ENCODE measurements at regions of chr19 and their contacts with region 1.

Region 1: DNA sequence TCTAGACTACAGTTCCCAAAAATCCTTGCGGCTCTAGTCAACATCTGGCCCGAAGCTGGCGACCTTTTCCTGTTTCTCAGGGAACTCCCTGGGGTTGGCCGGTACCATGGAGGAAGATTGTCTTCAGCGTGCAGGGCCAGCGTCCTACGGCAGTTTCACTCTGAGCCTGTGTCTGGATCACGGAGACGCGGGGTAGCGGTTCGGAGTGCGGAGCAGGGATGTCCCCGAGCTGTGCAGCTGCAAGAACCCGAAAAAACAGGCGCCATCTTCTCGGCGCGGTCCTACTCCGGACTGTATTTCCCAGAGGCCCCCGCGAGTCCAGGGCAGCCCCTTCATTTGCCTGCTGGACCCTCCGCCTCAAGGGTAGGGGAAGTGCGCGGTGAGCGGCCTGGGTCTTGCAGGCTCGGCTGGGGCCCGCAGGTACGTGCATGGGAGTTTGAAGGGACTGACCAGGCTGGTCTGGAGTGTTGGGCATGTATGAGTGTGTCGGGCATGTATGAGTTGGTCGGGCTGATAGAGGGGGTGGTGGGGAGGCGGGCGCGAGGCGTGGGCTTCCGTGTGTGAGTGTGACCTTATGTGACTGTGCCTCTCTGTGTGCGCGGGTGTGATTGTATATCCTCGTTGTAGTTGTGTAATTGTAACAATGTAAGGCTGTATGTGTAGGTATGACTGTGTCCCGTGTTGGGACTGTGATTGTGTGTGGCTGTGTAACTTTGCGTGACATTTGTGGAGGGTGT is at the start of gene ZNF383:
- DNase-seq: peak; percentile 81 to 88
- ATAC-seq: peak; percentile 83 to 93 (median 90)
- H3K4me3 ChIP-seq: peak within 1 kb of the TSS; percentile 87
- H3K4me3 Mint-ChIP-seq: peak within 1 kb of the TSS; percentile 87
- H3K27ac ChIP-seq: peak within 1 kb of the TSS; percentile 88
- H3K27ac Mint-ChIP-seq: peak within 1 kb of the TSS; percentile 85 to 96
- H3K4me1 ChIP-seq: peaks cover 8% of the 10 kb centered on the region
- H3K4me1 Mint-ChIP-seq: peaks cover 26 to 32% of the 10 kb centered on the region in 2 donors
- H3K27me3 ChIP-seq: no peaks in the 10 kb centered on the region
- H3K27me3 Mint-ChIP-seq: peaks cover 0 to 2% of the 10 kb centered on the region in 2 donors
- CTCF ChIP-seq: no peak
- total RNA-seq, gene ZNF383: 21.6 to 27.1 (median 26.4) TPM

Region 2: DNA sequence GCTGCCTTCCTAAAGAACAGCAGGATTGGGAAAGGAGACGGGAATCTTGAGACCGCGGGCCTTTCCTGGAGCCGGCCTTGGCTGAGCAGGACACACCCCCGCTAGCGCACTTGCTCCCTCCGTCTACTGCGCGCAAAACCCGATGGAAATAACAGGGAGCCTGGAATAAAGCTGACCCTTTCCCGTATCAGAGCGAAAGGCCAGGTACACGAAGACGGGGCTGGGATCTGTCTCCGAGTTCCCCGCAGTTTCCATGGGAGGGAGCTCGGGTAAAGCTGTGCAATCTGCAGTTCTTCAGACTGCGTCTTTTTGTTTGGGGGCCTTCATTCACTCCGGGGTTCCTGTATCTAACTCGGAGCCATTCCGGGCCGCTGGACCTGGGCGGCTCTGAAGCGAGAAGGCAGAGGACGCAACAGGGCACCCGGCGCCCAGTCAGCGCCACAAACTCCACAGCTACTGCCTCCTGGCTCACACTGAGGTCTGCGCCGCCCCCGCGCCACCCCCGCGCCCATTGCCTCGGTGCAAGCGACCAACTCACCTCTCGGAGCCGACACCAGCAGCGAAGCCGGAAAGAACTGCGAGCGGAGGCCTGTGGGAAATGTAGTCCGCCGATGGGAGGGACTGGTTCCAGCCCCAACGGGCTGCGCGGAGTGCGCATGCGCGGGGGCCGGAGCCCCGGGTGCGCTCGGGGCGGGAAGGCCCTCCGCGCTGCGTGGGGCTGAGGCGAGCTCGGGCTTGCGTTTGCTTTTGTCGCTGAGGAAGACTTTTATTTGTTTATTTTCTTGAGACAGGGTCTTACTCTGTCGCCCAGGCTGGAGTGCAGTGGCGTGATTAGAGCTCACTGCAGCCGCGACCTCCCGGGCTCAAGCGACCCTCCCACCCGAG is 839.2 kb before region 1 on chr19 and contains the start of gene ZFP14:
- intact Hi-C with region 1: loop called (anchors 5 kb)
- DNase-seq: peak; percentile 91 to 97
- ATAC-seq: peak; percentile 98
- H3K4me3 ChIP-seq: peak within 1 kb of the TSS; percentile 81
- H3K4me3 Mint-ChIP-seq: peak within 1 kb of the TSS; percentile 88
- H3K27ac ChIP-seq: peak within 1 kb of the TSS; percentile 89
- H3K27ac Mint-ChIP-seq: peak within 1 kb of the TSS; percentile 89 to 98
- H3K4me1 ChIP-seq: peaks cover 10% of the 10 kb centered on the region
- H3K4me1 Mint-ChIP-seq: peaks cover 18 to 23% of the 10 kb centered on the region in 2 donors
- H3K27me3 ChIP-seq: no peaks in the 10 kb centered on the region
- H3K27me3 Mint-ChIP-seq: no peaks in the 10 kb centered on the region
- CTCF ChIP-seq: no peak
- total RNA-seq, gene ZFP14: 7.4 to 8.2 (median 7.8) TPM

Region 3: GRCh38 chr19:37059142-37059541 is 158.9 kb before region 1 on chr19:
- intact Hi-C with region 1: no loop called
- DNase-seq: no peak
- ATAC-seq: no peak
- H3K4me3 ChIP-seq: no peak overlapping the region
- H3K4me3 Mint-ChIP-seq: no peak overlapping the region
- H3K27ac ChIP-seq: no peak overlapping the region
- H3K27ac Mint-ChIP-seq: no peak overlapping the region
- H3K4me1 ChIP-seq: no peaks in the 10 kb centered on the region
- H3K4me1 Mint-ChIP-seq: no peaks in the 10 kb centered on the region
- H3K27me3 ChIP-seq: no peaks in the 10 kb centered on the region
- H3K27me3 Mint-ChIP-seq: no peaks in the 10 kb centered on the region
- CTCF ChIP-seq: no peak

Region 4: GRCh38 chr19:37077934-37078725 is 139.9 kb before region 1 on chr19 and contains the start of gene ZNF420:
- intact Hi-C with region 1: loop called (anchors 1 kb)
- DNase-seq: peak; percentile 82 to 94
- ATAC-seq: peak; percentile 90 to 96 (median 93)
- H3K4me3 ChIP-seq: peak within 1 kb of the TSS; percentile 83
- H3K4me3 Mint-ChIP-seq: peak within 1 kb of the TSS; percentile 100
- H3K27ac ChIP-seq: peak within 1 kb of the TSS; percentile 77
- H3K27ac Mint-ChIP-seq: peak within 1 kb of the TSS; percentile 96 to 97
- H3K4me1 ChIP-seq: peaks cover 8% of the 10 kb centered on the region
- H3K4me1 Mint-ChIP-seq: peaks cover 32 to 37% of the 10 kb centered on the region in 2 donors
- H3K27me3 ChIP-seq: no peaks in the 10 kb centered on the region
- H3K27me3 Mint-ChIP-seq: no peaks in the 10 kb centered on the region
- CTCF ChIP-seq: no peak
- total RNA-seq, gene ZNF420: 6.4 to 15.6 (median 10.2) TPM

Region 5: DNA sequence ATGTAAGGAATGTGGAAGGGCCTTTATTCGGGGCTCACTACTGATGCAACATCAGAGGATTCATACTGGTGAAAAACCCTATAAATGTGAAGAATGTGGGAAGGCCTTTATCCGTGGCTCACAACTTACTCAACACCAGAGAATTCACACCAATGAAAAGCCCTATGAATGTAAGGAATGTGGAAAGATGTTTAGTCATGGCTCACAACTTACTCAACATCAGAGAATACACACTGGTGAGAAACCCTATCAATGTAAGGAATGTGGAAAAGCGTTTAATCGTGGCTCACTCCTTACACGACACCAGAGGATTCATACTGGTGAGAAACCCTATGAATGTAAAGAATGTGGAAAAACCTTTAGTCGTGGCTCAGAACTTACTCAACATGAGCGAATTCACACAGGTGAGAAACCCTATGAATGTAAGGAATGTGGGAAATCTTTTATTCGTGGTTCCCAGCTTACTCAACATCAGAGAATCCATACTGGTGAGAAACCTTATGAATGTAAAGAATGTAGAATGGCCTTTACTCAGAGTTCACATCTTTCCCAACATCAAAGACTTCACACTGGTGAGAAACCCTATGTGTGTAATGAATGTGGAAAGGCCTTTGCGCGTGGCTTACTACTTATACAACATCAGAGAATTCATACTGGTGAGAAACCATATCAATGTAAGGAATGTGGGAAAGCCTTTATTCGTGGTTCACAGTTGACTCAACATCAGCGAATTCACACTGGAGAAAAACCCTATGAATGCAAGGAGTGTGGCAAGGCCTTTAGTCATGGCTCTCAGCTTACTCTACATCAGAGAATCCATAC is 89.8 kb before region 1 on chr19:
- intact Hi-C with region 1: no loop called
- DNase-seq: no peak
- ATAC-seq: no peak
- H3K4me3 ChIP-seq: no peak overlapping the region
- H3K4me3 Mint-ChIP-seq: no peak overlapping the region
- H3K27ac ChIP-seq: no peak overlapping the region
- H3K27ac Mint-ChIP-seq: no peak overlapping the region
- H3K4me1 ChIP-seq: no peaks in the 10 kb centered on the region
- H3K4me1 Mint-ChIP-seq: no peaks in the 10 kb centered on the region
- H3K27me3 ChIP-seq: no peaks in the 10 kb centered on the region
- H3K27me3 Mint-ChIP-seq: no peaks in the 10 kb centered on the region
- CTCF ChIP-seq: no peak

Region 6: GRCh38 chr19:37309834-37310575 is 92.0 kb after region 1 on chr19:
- intact Hi-C with region 1: loop called (anchors 10 kb)
- DNase-seq: peak in 1 of 2 donors; percentile 66
- ATAC-seq: peak in 1 of 3 donors; percentile 38
- H3K4me3 ChIP-seq: no peak overlapping the region
- H3K4me3 Mint-ChIP-seq: no peak overlapping the region
- H3K27ac ChIP-seq: no peak overlapping the region
- H3K27ac Mint-ChIP-seq: no peak overlapping the region
- H3K4me1 ChIP-seq: peaks cover 15% of the 10 kb centered on the region
- H3K4me1 Mint-ChIP-seq: peaks cover 11 to 16% of the 10 kb centered on the region in 2 donors
- H3K27me3 ChIP-seq: no peaks in the 10 kb centered on the region
- H3K27me3 Mint-ChIP-seq: peaks cover 0 to 3% of the 10 kb centered on the region in 2 donors
- CTCF ChIP-seq: peak; percentile 51

Measured in natural killer cell (primary cell).